ENCODE measurements at regions of chr14 and their contacts with region 1.

Region 1: GRCh38 chr14:69129264-69129880 is 23.5 kb downstream of the DCAF5 start:
- DNase-seq: peak in 4 of 5 donors; percentile 68 to 78 (median 72)
- ATAC-seq: peak; percentile 70 to 84 (median 78)
- H3K4me3 ChIP-seq: no peak overlapping the region
- H3K27ac ChIP-seq: peak overlapping the region in 4 of 12 donors; percentile 6 to 64 (median 18)
- H3K4me1 ChIP-seq: peaks cover 2 to 82% (median 47%) of the 10 kb centered on the region in 12 donors
- H3K27me3 ChIP-seq: no peaks in the 10 kb centered on the region
- CTCF ChIP-seq: peak; percentile 85 to 96 (median 91)
- POLR2A ChIP-seq: no peak

Region 2: GRCh38 chr14:68426661-68427549 is 702.5 kb before region 1 on chr14:
- intact Hi-C with region 1: no loop called
- DNase-seq: no peak
- ATAC-seq: peak in 1 of 4 donors; percentile 15
- H3K4me3 ChIP-seq: no peak overlapping the region
- H3K27ac ChIP-seq: no peak overlapping the region
- H3K4me1 ChIP-seq: peaks cover 0 to 6% (median 0%) of the 10 kb centered on the region in 12 donors
- H3K27me3 ChIP-seq: no peaks in the 10 kb centered on the region
- CTCF ChIP-seq: no peak
- POLR2A ChIP-seq: no peak

Region 3: GRCh38 chr14:69153131-69153872 is 23.9 kb after region 1 on chr14:
- intact Hi-C with region 1: loop called in 1 of 10 experiments (anchors 2 kb)
- DNase-seq: peak; percentile 94 to 97 (median 96)
- ATAC-seq: peak; percentile 92 to 96 (median 94)
- H3K4me3 ChIP-seq: peak overlapping the region; percentile 74 to 97 (median 90)
- H3K27ac ChIP-seq: peak overlapping the region; percentile 80 to 99 (median 96)
- H3K4me1 ChIP-seq: peaks cover 9 to 41% (median 27%) of the 10 kb centered on the region in 12 donors
- H3K27me3 ChIP-seq: no peaks in the 10 kb centered on the region
- CTCF ChIP-seq: no peak
- POLR2A ChIP-seq: peak; percentile 26 to 76

Region 4: GRCh38 chr14:69226178-69226577 is 96.8 kb after region 1 on chr14:
- intact Hi-C with region 1: loop called in 2 of 10 experiments (anchors 5 to 10 kb)
- DNase-seq: peak in 1 of 5 donors; percentile 10
- ATAC-seq: peak; percentile 52 to 87 (median 82)
- H3K4me3 ChIP-seq: no peak overlapping the region
- H3K27ac ChIP-seq: peak overlapping the region in 11 of 12 donors; percentile 41 to 81 (median 59)
- H3K4me1 ChIP-seq: peaks cover 0 to 27% (median 11%) of the 10 kb centered on the region in 12 donors
- H3K27me3 ChIP-seq: no peaks in the 10 kb centered on the region
- CTCF ChIP-seq: no peak
- POLR2A ChIP-seq: no peak

Region 5: GRCh38 chr14:69363055-69363454 is 233.7 kb after region 1 on chr14:
- intact Hi-C with region 1: loop called in 3 of 10 experiments (anchors 10 kb)
- DNase-seq: peak in 4 of 5 donors; percentile 39 to 55 (median 48)
- ATAC-seq: peak; percentile 70 to 92 (median 88)
- H3K4me3 ChIP-seq: no peak overlapping the region
- H3K27ac ChIP-seq: no peak overlapping the region
- H3K4me1 ChIP-seq: no peaks in the 10 kb centered on the region
- H3K27me3 ChIP-seq: no peaks in the 10 kb centered on the region
- CTCF ChIP-seq: peak; percentile 31 to 70 (median 54)
- POLR2A ChIP-seq: no peak

Region 6: DNA sequence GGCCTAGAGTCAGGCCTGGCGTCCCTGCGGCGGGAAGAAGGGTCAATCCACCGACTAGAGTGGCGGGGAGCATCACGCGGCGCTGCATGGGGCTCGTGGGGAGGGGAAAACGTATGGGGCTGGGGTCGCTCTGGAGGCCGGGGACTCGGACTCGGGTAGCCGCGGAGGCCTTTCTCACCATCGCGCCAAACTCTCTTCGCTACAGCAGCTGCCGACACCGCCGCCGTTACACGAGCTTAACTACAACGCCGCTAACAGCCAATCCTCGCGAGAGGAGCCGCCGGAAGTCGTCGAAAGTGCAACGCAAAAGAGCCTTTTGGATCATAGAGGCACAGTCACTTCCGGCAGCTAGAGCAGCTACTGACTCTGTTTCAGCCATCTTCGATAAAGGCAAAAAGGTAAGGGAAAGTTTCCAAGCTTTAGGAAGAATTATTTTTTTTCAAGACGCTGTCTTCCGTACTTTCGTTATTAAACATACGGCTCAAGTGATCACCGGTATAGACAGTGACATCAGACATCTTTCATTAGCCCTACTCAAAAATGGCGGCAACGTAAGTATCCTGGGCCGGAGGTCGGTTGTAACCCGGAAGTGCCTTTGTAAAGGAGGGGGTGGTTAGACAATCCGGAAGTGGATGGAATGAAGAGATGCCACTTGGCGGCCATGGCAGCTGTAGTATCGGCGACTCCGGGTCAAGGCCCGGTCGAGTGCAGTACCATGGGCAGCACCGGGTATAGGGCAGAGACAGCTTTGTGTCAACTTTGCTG is 268.9 kb after region 1 on chr14 and contains the starts of genes ERH and SLC39A9:
- intact Hi-C with region 1: loop called in 1 of 10 experiments (anchors 10 kb)
- DNase-seq: peak; percentile 96 to 97 (median 97)
- ATAC-seq: peak; percentile 97 to 98 (median 98)
- H3K4me3 ChIP-seq: peak within 1 kb of the TSS; percentile 52 to 95 (median 80)
- H3K27ac ChIP-seq: peak within 1 kb of the TSS; percentile 81 to 97 (median 90)
- H3K4me1 ChIP-seq: peaks cover 10 to 63% (median 45%) of the 10 kb centered on the region in 12 donors
- H3K27me3 ChIP-seq: no peaks in the 10 kb centered on the region
- CTCF ChIP-seq: peak in 1 of 12 donors; percentile 8
- POLR2A ChIP-seq: peak in 1 of 2 donors; percentile 41
- total RNA-seq, gene ERH: 44.3 to 147 (median 128) TPM
- total RNA-seq, gene SLC39A9: 16.9 to 37.5 (median 25.5) TPM

Region 7: GRCh38 chr14:69460093-69460701 is 330.8 kb after region 1 on chr14:
- intact Hi-C with region 1: loop called in 3 of 10 experiments (anchors 2 to 10 kb)
- DNase-seq: peak in 4 of 5 donors; percentile 44 to 61 (median 52)
- ATAC-seq: peak in 3 of 4 donors; percentile 83 to 92 (median 86)
- H3K4me3 ChIP-seq: no peak overlapping the region
- H3K27ac ChIP-seq: no peak overlapping the region
- H3K4me1 ChIP-seq: peaks cover 0 to 7% (median 0%) of the 10 kb centered on the region in 12 donors
- H3K27me3 ChIP-seq: no peaks in the 10 kb centered on the region
- CTCF ChIP-seq: peak; percentile 57 to 88 (median 75)
- POLR2A ChIP-seq: no peak